Mammary epithelial cell (primary cell): ENCODE measurements at regions of chr3 and their contacts with region 1.

Region 1: GRCh38 chr3:196979545-196979944 is 10.9 kb upstream of the PIGZ start:
- DNase-seq: no peak
- H3K4me3 ChIP-seq: no peak overlapping the region
- H3K27ac ChIP-seq: no peak overlapping the region
- H3K4me1 ChIP-seq: peaks cover 4% of the 10 kb centered on the region
- H3K27me3 ChIP-seq: no peaks in the 10 kb centered on the region
- CTCF ChIP-seq: no peak

Region 2: DNA sequence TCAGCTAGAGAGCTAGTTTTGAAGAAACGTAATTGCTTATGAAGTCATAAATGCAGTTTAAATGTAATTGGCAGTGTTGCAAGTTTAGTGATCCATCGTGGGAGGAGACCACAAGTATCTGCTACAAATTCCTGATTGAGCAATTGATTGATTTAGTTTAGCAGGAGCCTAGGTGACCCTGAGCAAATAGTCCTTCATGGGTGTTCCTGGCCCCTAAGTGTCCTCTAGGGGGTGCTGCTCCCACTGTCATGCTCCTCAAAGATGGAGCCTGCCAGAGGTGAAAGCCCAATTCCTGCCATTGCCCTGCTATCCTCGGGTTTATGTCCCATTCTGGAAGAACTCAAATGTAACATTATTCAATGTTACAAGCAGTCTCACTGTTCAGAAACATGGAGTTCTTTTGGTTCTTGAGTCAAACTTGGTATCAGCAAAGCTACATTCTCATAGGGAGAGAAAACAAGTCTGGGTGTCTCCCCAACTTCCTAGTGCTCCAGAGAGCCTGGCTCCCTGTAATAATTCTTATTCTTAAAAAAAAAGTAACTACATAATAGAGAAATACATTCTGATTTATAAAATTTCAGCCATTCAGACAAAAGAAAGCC is 141.6 kb before region 1 on chr3:
- CTCF ChIA-PET with region 1: no interaction called
- dilution Hi-C with region 1: no loop called
- in situ Hi-C with region 1: no loop called
- intact Hi-C with region 1: no loop called
- DNase-seq: peak; percentile 36
- H3K4me3 ChIP-seq: no peak overlapping the region
- H3K27ac ChIP-seq: no peak overlapping the region
- H3K4me1 ChIP-seq: no peaks in the 10 kb centered on the region
- H3K27me3 ChIP-seq: no peaks in the 10 kb centered on the region
- CTCF ChIP-seq: peak; percentile 85 to 89

Region 3: DNA sequence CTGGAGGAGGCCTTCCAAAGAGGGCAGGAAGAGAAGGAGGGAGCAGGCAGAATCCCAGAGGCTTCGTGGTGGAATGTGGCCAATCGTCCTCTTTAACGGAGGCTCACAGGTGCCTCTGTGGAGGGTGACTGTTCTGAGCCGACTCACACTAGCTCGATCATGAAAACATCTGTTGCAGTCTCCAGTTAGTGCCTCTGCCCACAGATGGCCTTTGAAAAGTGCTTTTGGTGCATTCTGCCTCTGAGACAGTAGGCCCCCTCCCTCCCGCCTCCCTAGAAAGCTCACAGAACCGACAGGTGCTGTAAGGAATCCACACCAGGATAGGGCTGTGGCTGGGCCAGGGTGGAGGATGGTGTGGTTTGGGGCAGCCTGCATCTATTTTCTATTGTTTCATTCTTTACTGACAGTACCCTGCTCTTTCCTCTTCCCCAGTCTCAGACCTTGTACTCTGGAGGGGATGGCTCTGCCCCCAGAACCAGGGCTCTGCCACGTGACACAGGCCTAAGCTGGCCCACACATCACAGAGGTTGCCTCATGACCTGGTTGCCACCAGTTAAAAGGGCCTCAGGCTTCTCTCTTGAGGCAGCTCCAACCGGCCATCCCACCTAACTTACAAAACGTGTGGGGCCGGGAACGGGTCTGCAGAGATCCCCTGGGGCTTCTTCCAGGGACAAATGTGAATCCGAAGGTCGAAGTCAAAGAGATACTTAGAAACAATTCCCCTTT is 16.3 kb after region 1 on chr3:
- CTCF ChIA-PET with region 1: no interaction called
- dilution Hi-C with region 1: no loop called
- in situ Hi-C with region 1: no loop called
- intact Hi-C with region 1: no loop called
- DNase-seq: no peak
- H3K4me3 ChIP-seq: no peak overlapping the region
- H3K27ac ChIP-seq: no peak overlapping the region
- H3K4me1 ChIP-seq: peaks cover 13% of the 10 kb centered on the region
- H3K27me3 ChIP-seq: no peaks in the 10 kb centered on the region
- CTCF ChIP-seq: no peak

Region 4: GRCh38 chr3:197029511-197030167 is 50.1 kb after region 1 on chr3 and contains the start of gene MELTF:
- CTCF ChIA-PET with region 1: no interaction called
- dilution Hi-C with region 1: no loop called
- in situ Hi-C with region 1: no loop called
- intact Hi-C with region 1: loop called (anchors 2 kb)
- DNase-seq: no peak
- H3K4me3 ChIP-seq: peak within 1 kb of the TSS; percentile 26 to 43 (median 42)
- H3K27ac ChIP-seq: no peak within 1 kb of the TSS
- H3K4me1 ChIP-seq: peaks cover 32% of the 10 kb centered on the region
- H3K27me3 ChIP-seq: no peaks in the 10 kb centered on the region
- CTCF ChIP-seq: peak; percentile 34 to 59
- total RNA-seq, gene MELTF: 5.8 to 11.7 TPM

Region 5: DNA sequence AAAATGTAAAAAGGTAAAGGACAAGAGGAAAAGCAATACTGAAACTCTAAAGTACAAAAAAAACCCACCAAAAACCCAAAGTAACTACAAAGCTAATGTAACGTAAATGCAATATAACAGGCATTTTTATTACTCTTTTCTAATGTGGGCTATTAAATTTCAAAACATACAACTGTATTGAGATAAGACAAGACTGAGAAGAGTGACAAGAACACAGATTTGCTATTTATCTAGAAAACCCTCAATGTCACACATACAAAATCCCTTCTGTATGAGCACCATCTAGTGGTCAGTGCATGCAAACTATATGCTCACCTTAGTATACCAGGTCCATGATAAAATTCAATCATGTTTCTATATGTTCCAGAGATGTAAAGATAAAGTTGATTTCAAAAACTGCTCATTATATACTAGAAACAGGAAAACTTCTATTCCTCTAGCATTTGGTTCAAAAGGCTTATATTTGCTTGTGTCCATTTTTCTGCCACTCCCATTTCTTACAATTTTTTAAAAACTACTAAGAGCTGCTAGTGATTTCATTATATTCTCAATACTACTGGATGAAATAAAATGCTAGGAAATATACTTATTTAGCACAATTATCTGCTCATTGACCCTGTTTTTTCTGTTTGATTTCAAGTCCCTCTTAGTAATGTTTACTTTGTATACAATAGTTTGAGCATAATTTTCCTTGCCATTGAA is 207.5 kb after region 1 on chr3:
- CTCF ChIA-PET with region 1: no interaction called
- dilution Hi-C with region 1: no loop called
- in situ Hi-C with region 1: no loop called
- intact Hi-C with region 1: loop called (anchors 2 kb)
- DNase-seq: peak; percentile 46
- H3K4me3 ChIP-seq: no peak overlapping the region
- H3K27ac ChIP-seq: no peak overlapping the region
- H3K4me1 ChIP-seq: no peaks in the 10 kb centered on the region
- H3K27me3 ChIP-seq: no peaks in the 10 kb centered on the region
- CTCF ChIP-seq: peak; percentile 83 to 95